ENCODE measurements at regions of chr9 and their contacts with region 1.

Region 1: DNA sequence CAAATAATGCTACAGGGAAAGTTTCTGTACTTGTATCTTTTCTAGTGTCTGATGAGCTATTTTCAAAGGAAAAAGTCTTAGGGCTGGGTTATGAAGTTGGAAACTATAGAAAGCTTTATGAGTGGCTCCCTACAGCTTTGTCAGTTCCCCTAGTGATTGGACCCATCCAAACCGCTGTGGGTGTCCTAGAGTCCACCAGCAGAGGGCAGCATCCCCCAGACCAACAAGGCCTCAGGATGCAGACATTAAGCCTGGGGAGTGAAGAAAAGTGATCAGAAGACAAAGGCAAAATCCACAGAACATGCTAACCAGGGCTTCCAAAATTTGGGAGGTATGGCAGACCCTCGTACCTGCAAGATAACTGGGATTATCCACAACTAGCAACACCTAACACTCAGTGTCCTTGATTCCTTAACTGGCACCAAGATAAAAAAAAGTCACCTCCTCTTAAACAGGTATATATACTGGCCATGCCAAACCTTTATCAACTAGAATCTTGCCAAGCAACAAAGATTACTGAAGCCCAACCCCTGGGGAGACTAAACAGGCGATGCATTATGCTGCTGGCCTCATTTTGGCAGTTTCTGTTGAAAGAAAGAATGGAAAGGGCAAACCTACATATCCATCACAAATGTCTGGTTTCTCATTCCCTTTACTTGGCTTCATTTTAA is 110.4 kb upstream of the NR5A1 start:
- DNase-seq: peak; percentile 54
- ATAC-seq: peak; percentile 97
- H3K4me3 ChIP-seq: no peak overlapping the region
- H3K27ac ChIP-seq: peak overlapping the region; percentile 46; the same call in 1 of the 2 replicates
- H3K4me1 ChIP-seq: peaks cover 42% of the 10 kb centered on the region
- H3K27me3 ChIP-seq: no peaks in the 10 kb centered on the region
- CTCF ChIP-seq: peak; percentile 86

Region 2: GRCh38 chr9:124660341-124660801 is 42.8 kb after region 1 on chr9:
- CTCF ChIA-PET with region 1: interaction called, 4 read pairs
- POLR2A ChIA-PET with region 1: no interaction called
- in situ Hi-C with region 1: no loop called
- intact Hi-C with region 1: loop called (anchors 5 kb)
- DNase-seq: no peak
- ATAC-seq: 0 out of 2 replicates have a peak, but pooled peaks have one; percentile 13
- H3K4me3 ChIP-seq: peak overlapping the region; percentile 73 to 77
- H3K27ac ChIP-seq: peak overlapping the region; percentile 98
- H3K4me1 ChIP-seq: peaks cover 43% of the 10 kb centered on the region
- H3K27me3 ChIP-seq: no peaks in the 10 kb centered on the region
- CTCF ChIP-seq: no peak

Region 3: DNA sequence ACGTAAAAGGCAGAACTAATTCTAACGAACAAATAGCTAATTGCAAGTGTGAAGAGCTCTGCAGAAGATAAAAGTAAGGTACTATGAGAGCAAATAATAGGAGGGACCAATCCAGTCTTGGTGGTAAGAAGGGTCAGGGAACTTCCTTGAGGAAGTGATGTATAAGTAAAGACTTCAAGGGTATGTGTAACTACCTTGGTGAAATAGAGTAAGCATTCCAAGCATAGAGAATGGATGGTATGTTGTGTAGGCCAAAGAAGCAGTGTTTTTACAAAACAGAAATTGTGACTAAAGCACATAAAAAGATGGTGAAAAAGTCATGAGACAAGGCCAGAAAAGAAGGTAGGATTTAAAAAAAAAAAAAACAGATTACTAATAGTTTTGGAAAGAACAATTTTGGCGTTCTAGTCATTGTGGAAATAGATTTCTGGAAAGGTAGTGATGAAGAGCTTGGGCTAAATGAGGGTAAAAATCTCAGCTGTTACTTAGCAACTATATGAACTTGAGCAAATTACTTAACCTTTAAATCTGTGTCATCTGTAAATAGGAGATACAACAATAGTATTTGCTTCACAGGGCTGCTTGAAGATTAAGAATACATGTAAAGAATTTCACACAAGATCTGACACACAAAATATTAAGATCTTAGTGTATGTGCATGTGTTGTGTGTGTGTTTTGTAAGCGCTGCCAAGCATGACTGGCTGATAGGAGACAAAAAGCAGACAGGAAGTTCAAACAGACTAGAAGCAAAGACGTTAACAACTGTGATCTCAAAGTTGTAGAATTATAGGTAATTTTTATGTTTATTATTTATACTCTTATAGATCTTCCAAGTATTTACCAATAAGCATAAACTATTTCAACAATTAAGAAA is 80.0 kb after region 1 on chr9:
- CTCF ChIA-PET with region 1: no interaction called
- POLR2A ChIA-PET with region 1: no interaction called
- in situ Hi-C with region 1: no loop called
- intact Hi-C with region 1: loop called (anchors 5 kb)
- DNase-seq: no peak
- ATAC-seq: no peak
- H3K4me3 ChIP-seq: no peak overlapping the region
- H3K27ac ChIP-seq: no peak overlapping the region
- H3K4me1 ChIP-seq: peaks cover 3% of the 10 kb centered on the region; the same call in 1 of the 2 replicates
- H3K27me3 ChIP-seq: no peaks in the 10 kb centered on the region
- CTCF ChIP-seq: no peak

Region 4: DNA sequence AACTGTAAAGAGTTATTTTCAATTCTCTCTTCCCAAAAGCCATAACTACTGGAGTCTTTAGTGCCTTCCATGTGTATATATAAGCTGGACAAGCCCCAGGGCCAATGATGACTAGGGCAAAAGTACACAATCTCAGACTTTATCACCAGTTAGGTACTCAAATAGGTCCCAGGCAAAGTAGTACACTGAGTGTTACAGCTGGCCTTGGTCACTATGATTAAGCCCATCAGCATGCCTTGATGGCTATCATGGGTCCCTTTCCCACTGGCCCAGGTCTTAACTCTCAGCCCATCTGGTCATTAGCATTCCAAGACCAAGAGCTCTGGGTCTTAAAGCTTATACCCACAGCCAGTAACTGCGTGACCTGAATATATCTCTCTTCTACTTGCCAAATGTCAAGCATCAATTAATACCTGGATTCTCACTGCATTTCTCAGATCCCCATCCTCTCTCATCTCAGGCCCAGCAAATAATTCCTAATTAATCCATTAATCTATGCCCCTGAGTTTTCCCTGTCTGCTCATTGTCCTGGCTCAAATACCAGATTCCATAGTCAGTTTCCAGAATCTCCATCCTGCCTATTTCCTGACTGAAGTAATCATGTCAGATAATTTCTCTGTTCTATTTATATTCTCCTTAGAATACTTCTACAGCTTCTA is 91.2 kb after region 1 on chr9:
- CTCF ChIA-PET with region 1: interaction called, 12 read pairs
- POLR2A ChIA-PET with region 1: no interaction called
- in situ Hi-C with region 1: no loop called
- intact Hi-C with region 1: loop called (anchors 2 kb)
- DNase-seq: peak; percentile 15
- ATAC-seq: peak; percentile 81
- H3K4me3 ChIP-seq: no peak overlapping the region
- H3K27ac ChIP-seq: peak overlapping the region; percentile 59
- H3K4me1 ChIP-seq: peaks cover 24% of the 10 kb centered on the region
- H3K27me3 ChIP-seq: no peaks in the 10 kb centered on the region
- CTCF ChIP-seq: no peak

Region 5: DNA sequence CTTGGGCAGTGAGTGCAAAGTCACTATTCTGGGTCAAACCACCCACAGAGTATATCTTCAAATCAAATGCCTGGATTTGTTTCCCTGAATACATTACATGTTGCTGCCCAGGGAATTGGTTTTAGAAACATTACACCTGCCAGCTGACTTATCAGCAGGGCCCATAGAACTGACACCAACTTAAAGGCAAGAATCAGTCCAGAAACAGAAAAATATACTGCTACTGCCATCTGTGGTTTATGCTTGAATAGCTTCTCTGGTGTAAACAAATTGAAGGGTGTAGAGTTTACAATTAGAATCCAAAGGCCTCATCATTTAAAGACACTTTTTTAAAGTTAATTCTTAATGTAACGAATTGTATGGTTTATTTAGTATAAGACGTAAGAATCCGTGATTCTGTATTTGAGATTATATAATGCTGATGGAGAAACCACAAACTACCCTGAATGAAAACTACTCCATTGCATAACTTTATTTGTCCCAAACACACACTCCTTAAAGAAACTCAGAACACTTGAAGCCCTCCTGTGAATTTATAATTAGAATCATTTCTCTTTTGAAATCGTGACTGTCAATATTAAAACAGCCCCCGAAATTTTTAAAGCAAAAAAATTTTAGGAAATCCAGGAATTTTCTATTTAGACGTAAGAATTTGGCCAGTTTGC is 147.3 kb after region 1 on chr9:
- CTCF ChIA-PET with region 1: interaction called, 5 read pairs
- POLR2A ChIA-PET with region 1: interaction called, 11 read pairs
- in situ Hi-C with region 1: no loop called
- intact Hi-C with region 1: no loop called
- DNase-seq: no peak
- ATAC-seq: no peak; the same call in 1 of the 2 replicates
- H3K4me3 ChIP-seq: no peak overlapping the region
- H3K27ac ChIP-seq: no peak overlapping the region
- H3K4me1 ChIP-seq: peaks cover 35% of the 10 kb centered on the region
- H3K27me3 ChIP-seq: no peaks in the 10 kb centered on the region
- CTCF ChIP-seq: peak; percentile 36; the same call in 1 of the 2 replicates